ENCODE measurements at regions of chr4 and their contacts with region 1.

Region 1: DNA sequence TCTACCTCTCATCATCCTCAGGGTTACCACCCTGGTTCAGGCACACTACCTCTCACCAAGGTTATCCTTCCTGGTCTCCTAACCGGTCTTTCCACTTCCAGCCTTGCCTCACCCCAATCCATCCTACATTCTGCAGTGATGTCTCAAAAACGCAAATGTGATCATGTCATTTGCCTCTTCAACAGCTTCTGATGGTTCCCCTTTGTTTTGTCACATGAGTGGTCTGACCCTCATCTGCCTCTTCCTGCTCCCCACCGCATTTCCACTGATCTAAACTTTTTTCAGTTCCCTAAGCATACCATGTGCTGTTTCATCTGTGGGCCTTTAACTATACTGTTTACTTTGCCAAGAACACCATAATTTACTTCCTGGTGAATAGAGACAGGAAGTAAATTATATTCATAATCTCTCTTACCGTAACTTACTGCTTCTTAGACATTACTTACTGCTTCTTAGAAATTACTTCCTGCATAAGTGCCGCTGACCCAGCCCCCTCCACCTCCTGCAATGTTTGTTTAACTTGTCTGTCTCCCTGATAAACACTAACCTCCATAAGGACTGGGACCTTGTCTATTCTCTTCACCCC is 27.1 kb upstream of the NSUN7 start:
- DNase-seq: no peak
- ATAC-seq: peak; percentile 80
- H3K4me3 ChIP-seq: no peak overlapping the region
- H3K27ac ChIP-seq: peak overlapping the region; percentile 25
- H3K4me1 ChIP-seq: peaks cover 7% of the 10 kb centered on the region
- H3K27me3 ChIP-seq: no peaks in the 10 kb centered on the region
- CTCF ChIP-seq: no peak

Region 2: GRCh38 chr4:40446839-40447238 is 275.8 kb before region 1 on chr4:
- intact Hi-C with region 1: loop called (anchors 10 kb)
- DNase-seq: no peak
- ATAC-seq: peak; percentile 48
- H3K4me3 ChIP-seq: no peak overlapping the region
- H3K27ac ChIP-seq: no peak overlapping the region
- H3K4me1 ChIP-seq: no peaks in the 10 kb centered on the region
- H3K27me3 ChIP-seq: no peaks in the 10 kb centered on the region
- CTCF ChIP-seq: no peak

Measured in upper lobe of right lung (tissue), 1 donor.